Transverse colon (tissue), 4 donors: ENCODE measurements at regions of chr3 and their contacts with region 1.

Region 1: DNA sequence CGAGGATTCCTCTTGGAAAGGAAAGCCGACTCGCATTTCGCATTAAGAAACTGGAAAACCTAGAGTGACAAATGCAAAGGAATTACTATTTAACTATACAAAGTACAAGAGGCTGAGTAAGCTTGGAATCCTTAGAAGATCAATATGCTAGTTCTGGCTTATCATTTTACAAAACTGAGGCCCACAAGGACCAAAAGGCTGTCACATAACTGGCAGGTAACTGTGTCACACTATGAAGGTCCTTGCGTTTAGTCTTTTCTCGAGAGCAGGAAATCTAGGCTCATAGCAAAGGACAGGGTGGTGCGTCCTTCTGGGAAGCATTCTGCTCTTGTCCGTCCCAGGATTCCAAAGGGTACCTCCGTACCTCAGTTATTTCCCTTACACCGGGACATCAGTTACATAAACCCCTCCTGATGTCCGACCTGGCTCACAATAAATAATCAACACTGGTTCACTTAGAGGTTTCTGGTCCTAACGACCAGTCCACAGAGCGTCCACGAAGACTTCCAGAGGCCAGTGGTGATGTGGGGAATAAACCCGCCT is 577 bp downstream of the RPL24 start:
- DNase-seq: no peak
- H3K4me3 ChIP-seq: peak overlapping the region; percentile 41 to 88 (median 54)
- H3K27ac ChIP-seq: peak overlapping the region; percentile 89 to 92 (median 90)
- H3K4me1 ChIP-seq: peaks cover 12 to 32% (median 29%) of the 10 kb centered on the region in 4 donors
- H3K27me3 ChIP-seq: no peaks in the 10 kb centered on the region
- CTCF ChIP-seq: no peak
- EP300 ChIP-seq: no peak
- POLR2A ChIP-seq: no peak

Region 2: GRCh38 chr3:100708967-100709841 is 976.7 kb before region 1 on chr3 and contains the start of gene TFG:
- in situ Hi-C with region 1: no loop called
- intact Hi-C with region 1: no loop called
- DNase-seq: peak; percentile 99
- H3K4me3 ChIP-seq: peak within 1 kb of the TSS; percentile 82 to 97 (median 87)
- H3K27ac ChIP-seq: peak within 1 kb of the TSS; percentile 96 to 100 (median 98)
- H3K4me1 ChIP-seq: peaks cover 12 to 32% (median 19%) of the 10 kb centered on the region in 4 donors
- H3K27me3 ChIP-seq: peaks cover 15% of the 10 kb centered on the region
- CTCF ChIP-seq: no peak
- EP300 ChIP-seq: no peak
- POLR2A ChIP-seq: peak; percentile 81
- total RNA-seq, gene TFG: 72.2 to 118 (median 94.3) TPM

Region 3: GRCh38 chr3:101561630-101562328 is 124.2 kb before region 1 on chr3 and contains the start of gene TRMT10C:
- in situ Hi-C with region 1: loop called in 1 of 4 experiments (anchors 10 kb)
- intact Hi-C with region 1: no loop called
- DNase-seq: peak; percentile 94
- H3K4me3 ChIP-seq: peak within 1 kb of the TSS; percentile 54 to 96 (median 72)
- H3K27ac ChIP-seq: peak within 1 kb of the TSS; percentile 85 to 95 (median 87)
- H3K4me1 ChIP-seq: peaks cover 7 to 23% (median 9%) of the 10 kb centered on the region in 4 donors
- H3K27me3 ChIP-seq: peaks cover 29% of the 10 kb centered on the region
- CTCF ChIP-seq: no peak
- EP300 ChIP-seq: no peak
- POLR2A ChIP-seq: peak; percentile 88
- total RNA-seq, gene TRMT10C: 5.0 to 15.0 (median 11.0) TPM